ENCODE measurements at regions of chr15 and their contacts with region 1.

Region 1: DNA sequence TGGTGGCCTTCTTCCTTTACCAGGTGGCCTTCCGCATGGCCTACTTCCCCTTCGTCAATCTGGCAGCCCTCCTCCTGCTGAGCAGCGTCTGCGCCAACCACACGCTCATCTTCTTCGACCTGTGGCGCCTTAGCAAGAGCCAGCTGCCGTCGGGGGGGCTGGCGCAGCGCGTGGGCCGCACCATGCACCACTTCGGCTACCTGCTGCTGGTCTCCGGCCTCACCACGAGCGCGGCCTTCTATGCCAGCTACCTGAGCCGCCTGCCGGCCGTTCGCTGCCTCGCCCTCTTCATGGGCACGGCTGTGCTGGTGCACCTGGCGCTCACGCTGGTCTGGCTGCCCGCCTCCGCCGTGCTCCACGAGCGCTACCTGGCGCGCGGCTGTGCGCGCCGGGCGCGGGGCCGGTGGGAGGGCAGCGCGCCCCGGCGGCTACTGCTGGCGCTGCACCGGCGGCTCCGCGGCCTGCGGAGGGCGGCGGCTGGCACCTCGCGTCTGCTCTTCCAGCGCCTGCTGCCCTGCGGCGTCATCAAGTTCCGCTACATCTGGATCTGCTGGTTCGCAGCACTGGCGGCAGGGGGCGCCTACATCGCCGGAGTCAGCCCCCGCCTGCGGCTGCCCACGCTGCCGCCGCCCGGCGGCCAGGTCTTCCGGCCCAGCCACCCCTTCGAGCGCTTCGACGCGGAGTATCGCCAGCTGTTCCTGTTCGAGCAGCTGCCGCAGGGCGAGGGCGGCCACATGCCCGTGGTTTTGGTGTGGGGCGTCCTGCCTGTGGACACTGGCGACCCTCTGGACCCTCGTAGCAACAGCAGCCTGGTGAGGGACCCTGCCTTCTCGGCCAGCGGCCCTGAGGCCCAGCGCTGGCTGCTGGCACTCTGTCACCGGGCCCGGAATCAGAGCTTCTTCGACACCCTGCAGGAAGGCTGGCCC is 9.9 kb downstream of the DISP2 start:
- DNase-seq: peak; percentile 78
- ATAC-seq: peak; percentile 93
- H3K4me3 Mint-ChIP-seq: peak overlapping the region; percentile 83
- H3K27ac Mint-ChIP-seq: peak overlapping the region; percentile 82
- H3K4me1 Mint-ChIP-seq: peaks cover 13% of the 10 kb centered on the region
- H3K27me3 Mint-ChIP-seq: no peaks in the 10 kb centered on the region
- CTCF ChIP-seq: no peak

Region 2: GRCh38 chr15:40344631-40345120 is 23.3 kb before region 1 on chr15:
- CTCF ChIA-PET with region 1: interaction called, 4 read pairs
- POLR2A ChIA-PET with region 1: no interaction called
- intact Hi-C with region 1: loop called (anchors 1 kb)
- DNase-seq: peak; percentile 46
- ATAC-seq: peak; percentile 95
- H3K4me3 Mint-ChIP-seq: no peak overlapping the region
- H3K27ac Mint-ChIP-seq: no peak overlapping the region
- H3K4me1 Mint-ChIP-seq: no peaks in the 10 kb centered on the region
- H3K27me3 Mint-ChIP-seq: no peaks in the 10 kb centered on the region
- CTCF ChIP-seq: peak; percentile 16

Region 3: GRCh38 chr15:40357723-40358470 is 10.1 kb before region 1 on chr15 and contains the start of gene DISP2:
- CTCF ChIA-PET with region 1: no interaction called
- POLR2A ChIA-PET with region 1: interaction called, 3 read pairs
- intact Hi-C with region 1: loop called (anchors 1 kb)
- DNase-seq: peak; percentile 93
- ATAC-seq: peak; percentile 94
- H3K4me3 Mint-ChIP-seq: peak within 1 kb of the TSS; percentile 87
- H3K27ac Mint-ChIP-seq: no peak within 1 kb of the TSS
- H3K4me1 Mint-ChIP-seq: peaks cover 8% of the 10 kb centered on the region
- H3K27me3 Mint-ChIP-seq: no peaks in the 10 kb centered on the region
- CTCF ChIP-seq: no peak
- total RNA-seq, gene DISP2: 0.38 and 0.39 TPM in 2 replicates

Region 4: GRCh38 chr15:40382580-40383456 is 14.9 kb after region 1 on chr15 and contains the start of gene KNSTRN:
- CTCF ChIA-PET with region 1: interaction called, 3 read pairs
- POLR2A ChIA-PET with region 1: no interaction called
- intact Hi-C with region 1: loop called (anchors 1 kb)
- DNase-seq: peak; percentile 83
- ATAC-seq: peak; percentile 99
- H3K4me3 Mint-ChIP-seq: peak within 1 kb of the TSS; percentile 96
- H3K27ac Mint-ChIP-seq: peak within 1 kb of the TSS; percentile 73
- H3K4me1 Mint-ChIP-seq: peaks cover 12% of the 10 kb centered on the region
- H3K27me3 Mint-ChIP-seq: no peaks in the 10 kb centered on the region
- CTCF ChIP-seq: no peak
- total RNA-seq, gene KNSTRN: 11.5 and 13.4 TPM in 2 replicates

Region 5: DNA sequence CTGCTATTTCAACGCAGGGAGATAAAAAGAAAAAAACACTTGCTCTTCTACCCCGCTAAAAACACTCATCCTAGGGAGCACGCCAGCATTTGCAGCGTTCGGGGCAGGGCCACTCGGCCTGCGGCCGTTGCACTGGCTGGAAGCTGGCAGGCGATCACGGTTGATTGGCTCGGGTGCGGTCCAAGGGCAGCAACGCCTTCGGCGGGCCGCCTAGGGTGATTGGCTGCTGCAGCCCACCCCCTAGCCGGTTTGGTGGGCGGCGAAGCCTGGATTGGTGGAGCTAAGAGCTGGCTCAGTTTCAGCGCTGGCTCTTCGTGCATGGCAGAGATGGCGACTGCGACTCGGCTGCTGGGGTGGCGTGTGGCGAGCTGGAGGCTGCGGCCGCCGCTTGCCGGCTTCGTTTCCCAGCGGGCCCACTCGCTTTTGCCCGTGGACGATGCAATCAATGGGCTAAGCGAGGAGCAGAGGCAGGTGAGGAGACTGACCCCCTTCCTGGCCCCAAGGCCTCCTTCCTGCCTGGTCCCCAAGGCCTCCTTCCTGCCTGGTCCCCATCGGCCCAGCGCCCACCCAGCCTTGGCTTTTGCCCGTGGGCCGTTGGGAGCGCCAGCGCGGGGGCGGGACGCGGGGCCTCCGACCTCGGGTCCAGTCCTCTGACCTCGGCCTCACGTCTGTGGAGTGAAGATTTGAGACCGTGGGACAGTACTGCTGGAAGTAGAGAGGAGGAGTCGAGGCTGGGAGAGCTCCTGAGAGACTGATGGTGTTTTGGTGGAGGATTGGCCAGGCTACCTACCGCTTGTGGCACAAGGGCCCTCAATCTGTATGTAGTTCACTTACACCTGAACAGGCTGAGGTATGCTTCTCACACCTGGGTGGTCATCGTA is 37.8 kb after region 1 on chr15 and contains the start of gene IVD:
- CTCF ChIA-PET with region 1: interaction called, 5 read pairs
- POLR2A ChIA-PET with region 1: interaction called, 9 read pairs
- intact Hi-C with region 1: loop called (anchors 1 kb)
- DNase-seq: peak; percentile 69
- ATAC-seq: peak; percentile 94
- H3K4me3 Mint-ChIP-seq: peak within 1 kb of the TSS; percentile 88
- H3K27ac Mint-ChIP-seq: peak within 1 kb of the TSS; percentile 67
- H3K4me1 Mint-ChIP-seq: peaks cover 34% of the 10 kb centered on the region
- H3K27me3 Mint-ChIP-seq: no peaks in the 10 kb centered on the region
- CTCF ChIP-seq: no peak
- total RNA-seq, gene IVD: 63.5 and 76.7 TPM in 2 replicates

Region 6: GRCh38 chr15:40506964-40507571 is 139.1 kb after region 1 on chr15:
- CTCF ChIA-PET with region 1: no interaction called
- POLR2A ChIA-PET with region 1: no interaction called
- intact Hi-C with region 1: loop called (anchors 1 kb)
- DNase-seq: peak; percentile 49
- ATAC-seq: peak; percentile 45
- H3K4me3 Mint-ChIP-seq: peak overlapping the region; percentile 51
- H3K27ac Mint-ChIP-seq: no peak overlapping the region
- H3K4me1 Mint-ChIP-seq: peaks cover 25% of the 10 kb centered on the region
- H3K27me3 Mint-ChIP-seq: peaks cover 37% of the 10 kb centered on the region
- CTCF ChIP-seq: no peak

Region 7: DNA sequence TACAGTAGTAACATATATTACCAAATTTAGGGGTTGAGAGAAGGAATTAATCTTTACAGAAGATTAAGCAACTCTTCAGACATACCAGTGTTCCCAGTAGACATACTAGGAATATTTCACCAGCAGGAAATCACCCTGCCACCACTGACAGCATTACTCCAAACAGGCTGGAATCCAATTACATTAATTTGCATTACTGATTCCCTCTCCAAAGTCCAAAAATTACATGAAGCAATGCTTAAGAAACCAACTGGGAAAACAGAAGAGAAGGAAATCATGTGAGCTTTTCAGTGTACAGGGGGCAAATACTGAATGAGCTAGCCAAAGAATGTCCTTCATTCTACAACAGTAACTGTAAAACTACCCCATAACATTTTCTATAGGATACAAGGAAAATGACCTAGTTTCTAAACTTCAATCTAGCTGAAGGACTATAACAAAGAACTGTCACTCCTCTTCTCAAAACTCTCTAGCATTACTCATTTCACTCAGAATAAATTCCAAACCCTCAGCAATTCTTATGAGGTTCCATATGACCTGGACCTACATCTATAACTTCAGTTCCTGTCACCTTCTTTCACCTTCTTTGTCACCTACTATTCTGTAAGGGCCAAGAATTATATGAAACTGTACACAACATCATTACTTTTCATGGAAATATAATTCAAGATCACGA is 675.5 kb after region 1 on chr15:
- CTCF ChIA-PET with region 1: no interaction called
- POLR2A ChIA-PET with region 1: no interaction called
- intact Hi-C with region 1: no loop called
- DNase-seq: no peak
- ATAC-seq: no peak
- H3K4me3 Mint-ChIP-seq: no peak overlapping the region
- H3K27ac Mint-ChIP-seq: no peak overlapping the region
- H3K4me1 Mint-ChIP-seq: peaks cover under 1% of the 10 kb centered on the region
- H3K27me3 Mint-ChIP-seq: no peaks in the 10 kb centered on the region
- CTCF ChIP-seq: no peak